GM10248 (cell line): ENCODE measurements at regions of chr13 and their contacts with region 1.

Region 1: GRCh38 chr13:78137404-78138142 is 218.9 kb upstream of the EDNRB start:
- DNase-seq: peak; percentile 37
- CTCF ChIP-seq: peak; percentile 72

Region 2: DNA sequence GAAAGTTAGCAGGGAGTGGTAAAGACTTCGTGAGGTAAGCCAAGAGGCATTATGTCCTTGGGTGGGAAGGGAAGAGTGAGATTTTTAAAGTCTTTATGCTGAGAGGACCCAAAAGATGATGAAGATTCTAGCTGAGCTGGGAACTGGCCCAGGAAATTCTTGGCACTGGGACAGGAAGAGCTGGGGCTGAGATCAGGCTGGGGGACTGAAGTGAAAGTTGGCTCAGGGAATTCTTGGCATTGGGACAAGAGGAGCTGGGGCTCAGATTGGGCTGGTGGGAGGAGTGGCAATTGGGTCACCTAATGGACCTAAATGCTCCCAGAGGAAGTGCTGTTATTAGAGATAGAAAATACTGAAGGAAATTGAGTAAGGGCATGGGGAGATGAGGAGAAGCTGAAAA is 593.2 kb before region 1 on chr13:
- CTCF ChIA-PET with region 1: no interaction called
- POLR2A ChIA-PET with region 1: no interaction called
- DNase-seq: no peak
- CTCF ChIP-seq: no peak

Region 3: GRCh38 chr13:78147905-78148304 is 10.3 kb after region 1 on chr13:
- CTCF ChIA-PET with region 1: interaction called, 24 read pairs
- POLR2A ChIA-PET with region 1: no interaction called
- DNase-seq: no peak
- CTCF ChIP-seq: no peak

Region 4: DNA sequence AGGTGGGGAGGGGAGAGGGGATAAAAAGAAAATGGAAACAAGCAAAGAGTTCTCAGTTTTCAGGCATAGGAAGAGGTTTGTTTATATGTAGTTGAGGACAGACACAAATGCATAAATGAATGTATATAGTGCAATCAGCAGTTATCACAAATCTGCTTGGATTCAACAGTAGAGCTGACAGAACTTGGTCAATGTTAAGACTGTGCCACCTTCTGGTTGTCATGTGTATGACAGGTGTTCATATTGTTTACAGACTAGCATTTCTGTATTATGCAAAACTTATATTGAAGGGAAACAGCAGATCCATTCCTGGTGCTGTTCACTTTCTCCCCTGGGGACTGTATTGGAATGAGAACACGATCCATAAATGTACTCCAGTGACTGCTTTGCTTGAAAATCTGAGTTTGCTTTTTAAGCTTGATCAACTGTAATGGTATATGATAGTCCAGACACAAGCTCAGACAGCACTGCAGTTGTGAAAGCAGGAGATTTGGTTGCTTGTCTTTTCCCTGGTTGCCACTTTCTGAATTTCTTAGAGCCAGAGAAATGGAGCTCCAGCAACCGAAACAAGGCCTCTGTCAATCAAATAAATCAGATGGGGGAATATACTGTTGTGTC is 840.9 kb after region 1 on chr13:
- CTCF ChIA-PET with region 1: interaction called, 49 read pairs
- POLR2A ChIA-PET with region 1: no interaction called
- DNase-seq: peak; percentile 39
- CTCF ChIP-seq: peak; percentile 72